Activated CD8-positive, alpha-beta T cell treated with anti-CD3 and anti-CD28 coated beads for 36 hours (primary cell): ENCODE measurements at regions of chr11 and their contacts with region 1.

Region 1: DNA sequence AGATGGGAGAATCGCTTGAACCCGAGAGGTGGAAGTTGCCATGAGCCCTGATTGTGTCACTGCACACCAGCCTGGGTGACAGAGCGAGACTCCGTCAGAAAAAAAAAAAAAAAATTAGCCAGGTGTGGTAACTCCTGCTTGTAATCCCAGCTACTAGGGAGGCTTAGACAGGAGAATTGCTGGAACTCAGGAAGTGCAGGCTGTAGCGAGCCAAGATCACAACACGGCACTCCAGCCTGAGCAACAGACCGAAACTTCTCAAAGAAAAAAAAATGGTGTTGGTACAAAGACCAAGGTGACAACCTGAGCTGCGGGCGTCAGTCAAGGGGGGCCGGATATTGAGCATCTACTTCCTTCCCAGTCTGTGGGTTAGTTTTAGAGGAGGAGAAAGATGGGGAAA is 48.4 kb upstream of the HSPA8 start:
- DNase-seq: no peak
- ATAC-seq: no peak
- H3K4me3 Mint-ChIP-seq: no peak overlapping the region
- H3K27ac Mint-ChIP-seq: peak overlapping the region; percentile 63
- H3K4me1 Mint-ChIP-seq: peaks cover 3% of the 10 kb centered on the region
- H3K27me3 Mint-ChIP-seq: no peaks in the 10 kb centered on the region
- CTCF ChIP-seq: no peak

Region 2: GRCh38 chr11:123093739-123094138 is 16.6 kb before region 1 on chr11:
- CTCF ChIA-PET with region 1: interaction called, 19 read pairs
- POLR2A ChIA-PET with region 1: no interaction called
- intact Hi-C with region 1: no loop called
- DNase-seq: no peak
- ATAC-seq: no peak
- H3K4me3 Mint-ChIP-seq: no peak overlapping the region
- H3K27ac Mint-ChIP-seq: no peak overlapping the region
- H3K4me1 Mint-ChIP-seq: no peaks in the 10 kb centered on the region
- H3K27me3 Mint-ChIP-seq: no peaks in the 10 kb centered on the region
- CTCF ChIP-seq: no peak

Region 3: DNA sequence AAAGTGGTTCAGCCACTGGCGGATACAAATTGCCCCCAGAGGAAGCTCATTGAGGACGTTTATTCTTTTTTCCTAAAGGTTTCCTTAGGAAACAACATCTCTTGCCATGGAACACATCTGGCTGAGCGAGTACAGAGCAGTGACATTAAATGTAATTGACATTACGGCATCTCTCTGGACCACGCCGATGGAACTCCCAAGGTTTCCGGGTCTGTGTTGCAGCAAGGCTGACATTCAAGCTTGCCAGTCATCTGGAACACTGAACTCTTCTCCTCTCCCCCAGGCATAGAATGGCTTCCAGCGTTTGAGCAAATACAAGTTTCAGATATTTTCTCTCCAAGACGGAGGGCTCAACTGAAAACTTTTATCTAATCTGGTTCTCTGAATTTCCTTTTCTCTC is 42.6 kb after region 1 on chr11:
- CTCF ChIA-PET with region 1: interaction called, 11 read pairs
- POLR2A ChIA-PET with region 1: no interaction called
- intact Hi-C with region 1: no loop called
- DNase-seq: no peak
- ATAC-seq: no peak
- H3K4me3 Mint-ChIP-seq: no peak overlapping the region
- H3K27ac Mint-ChIP-seq: no peak overlapping the region
- H3K4me1 Mint-ChIP-seq: no peaks in the 10 kb centered on the region
- H3K27me3 Mint-ChIP-seq: peaks cover 1% of the 10 kb centered on the region
- CTCF ChIP-seq: no peak

Region 4: DNA sequence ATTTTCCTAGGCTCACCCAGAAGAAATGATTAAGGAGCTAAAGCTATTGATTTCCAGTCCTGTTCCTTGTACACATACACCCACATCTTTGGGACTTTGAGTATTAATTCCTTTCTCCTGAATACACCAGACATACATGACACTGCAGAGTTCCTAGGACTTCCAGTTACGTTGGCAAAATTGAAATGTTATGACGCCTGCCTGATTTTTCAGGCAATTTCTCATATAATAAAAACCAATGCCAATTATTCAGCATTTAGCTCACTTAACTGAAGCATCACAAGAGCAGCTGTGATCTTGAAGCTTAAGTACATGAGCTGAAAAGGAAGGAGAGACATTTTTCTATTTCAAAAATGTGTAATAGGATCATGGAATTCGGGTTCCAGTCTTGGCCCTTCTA is 80.2 kb after region 1 on chr11:
- CTCF ChIA-PET with region 1: interaction called, 12 read pairs
- POLR2A ChIA-PET with region 1: no interaction called
- intact Hi-C with region 1: no loop called
- DNase-seq: no peak
- ATAC-seq: no peak
- H3K4me3 Mint-ChIP-seq: no peak overlapping the region
- H3K27ac Mint-ChIP-seq: no peak overlapping the region
- H3K4me1 Mint-ChIP-seq: peaks cover 25% of the 10 kb centered on the region
- H3K27me3 Mint-ChIP-seq: peaks cover 49% of the 10 kb centered on the region
- CTCF ChIP-seq: no peak

Region 5: DNA sequence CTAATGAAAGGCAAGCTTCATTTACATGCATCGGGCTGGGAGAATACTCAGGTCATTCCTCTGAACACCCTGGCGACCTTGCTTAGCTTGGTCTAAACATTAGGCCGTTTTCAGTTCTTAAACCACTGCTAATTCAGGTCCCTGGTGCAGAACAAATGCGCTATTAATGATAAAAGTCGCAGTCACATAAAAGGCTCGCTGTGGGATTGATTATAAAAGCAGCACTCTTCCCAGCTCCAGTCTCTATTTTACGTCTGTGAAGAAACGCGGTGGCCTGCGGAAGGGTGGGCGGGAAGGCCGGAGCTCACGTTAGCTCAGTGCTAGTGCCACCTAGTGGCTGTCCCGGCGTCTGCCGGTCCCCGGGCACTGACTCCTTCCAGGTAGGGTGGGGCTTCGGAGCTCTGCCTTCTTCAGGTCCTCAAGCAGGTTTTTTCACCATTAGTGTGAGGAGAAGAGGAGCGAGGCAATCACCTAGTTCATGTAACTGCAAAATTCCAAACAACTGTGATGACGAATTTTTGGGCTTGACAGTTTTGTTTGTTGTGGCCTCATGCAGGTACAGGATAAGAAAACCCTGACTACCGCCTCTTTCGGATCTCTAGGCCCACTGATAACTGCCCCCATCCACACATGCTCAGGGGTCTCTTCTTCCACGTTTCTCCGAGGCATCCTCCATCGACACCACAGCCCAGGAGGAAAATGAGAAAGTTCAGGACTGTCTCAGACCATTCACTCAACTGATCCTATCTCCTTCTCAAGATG is 151.2 kb after region 1 on chr11:
- CTCF ChIA-PET with region 1: interaction called, 31 read pairs
- POLR2A ChIA-PET with region 1: no interaction called
- intact Hi-C with region 1: no loop called
- DNase-seq: peak; percentile 88
- ATAC-seq: peak; percentile 93
- H3K4me3 Mint-ChIP-seq: no peak overlapping the region
- H3K27ac Mint-ChIP-seq: no peak overlapping the region
- H3K4me1 Mint-ChIP-seq: peaks cover 6% of the 10 kb centered on the region
- H3K27me3 Mint-ChIP-seq: peaks cover 25% of the 10 kb centered on the region
- CTCF ChIP-seq: peak; percentile 88